ENCODE measurements at regions of chr11 and their contacts with region 1.

Region 1: GRCh38 chr11:64566042-64566914 is 24.7 kb upstream of the SLC22A12 start:
- DNase-seq: peak; percentile 59
- ATAC-seq: peak; percentile 45
- H3K4me3 Mint-ChIP-seq: peak overlapping the region; percentile 64
- H3K27ac Mint-ChIP-seq: peak overlapping the region; percentile 99
- H3K4me1 Mint-ChIP-seq: peaks cover 28% of the 10 kb centered on the region
- H3K27me3 Mint-ChIP-seq: no peaks in the 10 kb centered on the region
- CTCF ChIP-seq: no peak

Region 2: DNA sequence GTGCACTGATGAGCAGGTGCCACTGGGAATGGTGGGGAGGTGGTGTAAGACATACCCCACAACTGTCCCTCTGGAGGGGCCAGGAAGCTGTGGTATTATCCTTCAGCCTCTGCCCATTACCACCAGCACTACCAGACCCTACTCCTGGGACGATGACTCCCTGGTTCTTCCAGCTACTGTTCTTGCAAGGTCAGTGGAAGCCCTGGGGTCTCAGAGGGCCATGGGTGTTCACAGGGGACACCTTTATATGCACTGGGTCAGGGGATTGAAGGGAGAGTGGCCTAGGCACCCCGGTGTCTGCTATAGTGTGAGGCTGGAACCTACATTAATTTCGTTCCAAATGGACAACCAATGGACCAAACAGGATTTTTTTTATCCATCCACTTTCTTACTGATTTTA is 105.2 kb before region 1 on chr11:
- CTCF ChIA-PET with region 1: no interaction called
- POLR2A ChIA-PET with region 1: no interaction called
- DNase-seq: no peak
- ATAC-seq: no peak
- H3K4me3 Mint-ChIP-seq: no peak overlapping the region
- H3K27ac Mint-ChIP-seq: no peak overlapping the region
- H3K4me1 Mint-ChIP-seq: peaks cover 16% of the 10 kb centered on the region
- H3K27me3 Mint-ChIP-seq: peaks cover 46% of the 10 kb centered on the region
- CTCF ChIP-seq: no peak

Region 3: DNA sequence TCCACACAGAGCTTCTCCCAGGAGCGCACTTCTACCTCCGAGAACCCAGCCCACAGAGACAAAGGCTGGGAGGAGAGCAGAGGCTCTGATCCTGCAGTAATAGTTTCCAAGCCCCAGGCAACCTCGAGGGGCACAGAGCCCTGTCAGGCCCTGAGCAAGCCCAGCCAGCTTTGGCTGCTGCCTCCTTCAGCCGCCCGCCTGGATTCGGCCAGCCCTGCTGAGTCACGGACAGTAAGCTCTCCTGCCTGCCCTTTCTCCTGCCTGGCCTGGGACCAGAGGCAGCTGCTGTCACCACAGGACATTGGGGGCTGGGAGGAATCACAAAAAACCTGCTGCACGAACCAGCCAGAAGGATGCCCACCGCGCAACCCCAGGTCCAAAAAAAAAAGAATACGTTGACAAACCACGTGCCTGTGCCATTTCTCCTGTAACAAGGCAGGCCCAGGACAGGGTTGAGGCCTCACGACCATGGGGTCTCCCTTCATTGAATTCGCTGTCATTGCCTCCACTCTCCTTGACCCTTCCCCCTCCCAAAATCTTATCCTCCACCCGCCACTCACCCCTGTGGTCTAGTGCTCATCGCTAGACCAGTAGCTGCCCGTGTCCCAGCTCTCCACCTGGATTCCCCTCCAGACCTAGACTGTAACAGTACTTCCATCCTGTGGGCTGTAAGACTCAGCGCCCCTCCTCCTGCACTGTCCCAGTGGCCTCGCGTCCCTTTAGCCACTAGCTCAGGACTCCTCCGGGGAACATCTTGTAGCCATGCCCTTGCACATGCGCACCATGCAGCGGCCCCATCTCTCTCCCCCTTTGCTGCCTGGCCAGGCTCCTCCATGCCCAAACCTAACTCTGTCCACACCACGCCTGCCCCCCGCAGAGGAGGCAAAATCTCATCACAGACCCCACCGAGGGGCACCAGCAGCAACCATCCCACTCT is 17.3 kb after region 1 on chr11:
- CTCF ChIA-PET with region 1: interaction called, 13 read pairs
- POLR2A ChIA-PET with region 1: no interaction called
- DNase-seq: no peak
- ATAC-seq: no peak
- H3K4me3 Mint-ChIP-seq: no peak overlapping the region
- H3K27ac Mint-ChIP-seq: no peak overlapping the region
- H3K4me1 Mint-ChIP-seq: no peaks in the 10 kb centered on the region
- H3K27me3 Mint-ChIP-seq: peaks cover 11% of the 10 kb centered on the region
- CTCF ChIP-seq: no peak

Region 4: GRCh38 chr11:64644647-64645275 is 78.5 kb after region 1 on chr11:
- CTCF ChIA-PET with region 1: interaction called, 97 read pairs
- POLR2A ChIA-PET with region 1: interaction called, 4 read pairs
- DNase-seq: peak; percentile 51
- ATAC-seq: peak; percentile 53
- H3K4me3 Mint-ChIP-seq: peak overlapping the region; percentile 80
- H3K27ac Mint-ChIP-seq: no peak overlapping the region
- H3K4me1 Mint-ChIP-seq: peaks cover 25% of the 10 kb centered on the region
- H3K27me3 Mint-ChIP-seq: peaks cover 44% of the 10 kb centered on the region
- CTCF ChIP-seq: no peak